ENCODE measurements at regions of chr20 and their contacts with region 1.

Region 1: DNA sequence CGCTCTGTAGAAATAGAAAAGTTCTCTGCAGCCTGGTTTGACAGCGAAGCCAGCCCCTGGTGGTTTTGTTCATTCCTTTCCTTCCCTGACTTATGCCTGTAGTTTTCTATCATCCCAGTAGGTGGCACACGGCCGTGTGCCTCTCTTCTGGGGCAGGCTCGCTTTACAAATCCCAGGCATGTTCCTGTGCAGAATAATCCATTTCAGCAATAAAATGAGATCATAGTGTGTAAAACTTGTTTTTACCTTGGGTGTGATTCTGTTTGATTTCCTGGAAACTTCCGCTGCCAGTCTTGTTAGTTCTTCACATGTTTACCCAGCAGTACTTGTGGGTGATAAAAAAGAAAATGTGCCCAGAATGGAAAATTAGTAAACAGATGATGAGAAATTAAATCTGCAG is 7.4 kb upstream of the INSM1 start:
- DNase-seq: peak in 1 of 5 donors; percentile 22
- ATAC-seq: peak; percentile 64 to 86 (median 80)
- H3K4me3 ChIP-seq: no peak overlapping the region
- H3K27ac ChIP-seq: no peak overlapping the region
- H3K4me1 ChIP-seq: peaks cover 0 to 21% (median 0%) of the 10 kb centered on the region in 12 donors
- H3K27me3 ChIP-seq: peaks cover 19 to 53% (median 23%) of the 10 kb centered on the region in 9 donors
- CTCF ChIP-seq: peak; percentile 58 to 75 (median 69)
- POLR2A ChIP-seq: no peak

Region 2: GRCh38 chr20:20073801-20074371 is 286.6 kb before region 1 on chr20:
- intact Hi-C with region 1: loop called in 1 of 10 experiments (anchors 5 kb)
- DNase-seq: no peak
- ATAC-seq: no peak
- H3K4me3 ChIP-seq: no peak overlapping the region
- H3K27ac ChIP-seq: no peak overlapping the region
- H3K4me1 ChIP-seq: peaks cover 0 to 13% (median 0%) of the 10 kb centered on the region in 12 donors
- H3K27me3 ChIP-seq: peaks cover 0 to 6% (median 0%) of the 10 kb centered on the region in 9 donors
- CTCF ChIP-seq: no peak
- POLR2A ChIP-seq: no peak

Region 3: DNA sequence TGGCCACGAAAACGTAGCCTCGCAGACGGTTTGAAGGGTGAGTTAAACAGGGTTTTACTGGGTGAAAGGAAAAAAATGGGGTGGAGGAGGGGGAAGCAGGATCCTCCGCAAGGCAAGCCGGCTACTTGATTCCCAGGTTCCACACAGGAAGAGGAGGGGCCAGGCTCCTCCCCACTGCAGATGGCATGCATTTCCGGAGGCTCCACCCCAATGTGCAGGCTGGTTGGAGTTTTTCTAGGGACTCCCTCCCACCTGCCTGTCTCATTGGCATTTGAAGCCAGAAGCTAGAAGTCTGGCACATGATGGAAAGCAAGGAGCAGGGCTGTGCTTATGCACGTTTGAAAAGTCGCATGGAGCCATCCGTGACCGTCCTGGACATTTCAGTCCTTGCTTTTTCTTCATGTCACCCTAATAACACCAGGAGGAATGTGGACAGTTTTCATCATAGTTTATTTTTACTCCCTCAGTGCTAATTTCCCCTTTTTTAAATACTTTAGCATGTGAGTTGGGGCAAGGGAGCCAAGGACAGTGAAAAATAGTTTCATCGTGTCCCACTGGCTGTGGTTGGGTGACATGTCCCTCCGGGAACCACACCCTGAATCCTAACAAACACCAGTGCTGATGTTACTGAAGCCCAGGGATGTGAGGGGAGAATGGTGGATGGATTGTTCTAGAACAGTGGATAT is 92.6 kb before region 1 on chr20:
- intact Hi-C with region 1: no loop called
- DNase-seq: peak in 1 of 5 donors; percentile 48
- ATAC-seq: peak in 1 of 4 donors; percentile 46
- H3K4me3 ChIP-seq: no peak overlapping the region
- H3K27ac ChIP-seq: no peak overlapping the region
- H3K4me1 ChIP-seq: peaks cover 0 to 15% (median 0%) of the 10 kb centered on the region in 12 donors
- H3K27me3 ChIP-seq: peaks cover 0 to under 1% (median 0%) of the 10 kb centered on the region in 9 donors
- CTCF ChIP-seq: no peak
- POLR2A ChIP-seq: no peak

Region 4: DNA sequence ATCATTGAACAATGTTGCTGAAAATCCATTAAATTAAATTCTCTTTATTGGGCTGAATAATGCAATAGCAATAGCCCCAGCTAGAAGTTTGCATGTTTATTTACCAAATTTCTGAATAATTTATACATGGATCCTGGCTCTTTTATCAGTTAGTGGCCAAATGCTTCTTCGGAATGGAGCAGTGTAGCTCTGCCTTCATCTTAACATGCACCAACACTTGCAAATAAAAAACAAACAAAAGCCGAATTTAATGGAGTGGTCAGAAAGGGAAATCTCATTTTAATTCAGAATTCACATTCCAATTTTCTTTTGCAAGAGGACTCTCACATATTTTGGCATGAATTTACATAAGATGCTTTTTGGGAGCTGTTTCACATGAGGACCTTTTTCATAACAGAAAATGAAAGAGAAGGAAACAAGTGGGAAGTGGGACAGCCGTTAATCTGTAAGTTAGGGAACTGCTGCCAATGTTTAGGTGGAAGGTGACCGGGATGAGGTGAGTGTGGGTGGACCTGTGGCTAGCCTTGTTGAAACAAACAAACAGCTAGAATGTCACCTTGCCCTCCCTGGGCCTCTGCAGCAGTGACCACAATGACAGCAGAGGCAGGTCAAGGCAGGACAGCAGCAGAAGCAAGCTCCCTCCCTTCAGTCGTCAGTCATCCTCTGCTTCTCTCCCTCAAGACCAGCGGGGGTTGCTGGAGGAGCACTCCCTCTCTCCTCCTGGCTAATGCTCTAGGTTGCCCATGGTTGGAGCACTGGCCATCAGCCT is 80.6 kb after region 1 on chr20:
- intact Hi-C with region 1: loop called in 1 of 10 experiments (anchors 10 kb)
- DNase-seq: no peak
- ATAC-seq: peak; percentile 20 to 73 (median 56)
- H3K4me3 ChIP-seq: no peak overlapping the region
- H3K27ac ChIP-seq: no peak overlapping the region
- H3K4me1 ChIP-seq: peaks cover 0 to 13% (median 5%) of the 10 kb centered on the region in 12 donors
- H3K27me3 ChIP-seq: no peaks in the 10 kb centered on the region
- CTCF ChIP-seq: no peak
- POLR2A ChIP-seq: no peak

Region 5: DNA sequence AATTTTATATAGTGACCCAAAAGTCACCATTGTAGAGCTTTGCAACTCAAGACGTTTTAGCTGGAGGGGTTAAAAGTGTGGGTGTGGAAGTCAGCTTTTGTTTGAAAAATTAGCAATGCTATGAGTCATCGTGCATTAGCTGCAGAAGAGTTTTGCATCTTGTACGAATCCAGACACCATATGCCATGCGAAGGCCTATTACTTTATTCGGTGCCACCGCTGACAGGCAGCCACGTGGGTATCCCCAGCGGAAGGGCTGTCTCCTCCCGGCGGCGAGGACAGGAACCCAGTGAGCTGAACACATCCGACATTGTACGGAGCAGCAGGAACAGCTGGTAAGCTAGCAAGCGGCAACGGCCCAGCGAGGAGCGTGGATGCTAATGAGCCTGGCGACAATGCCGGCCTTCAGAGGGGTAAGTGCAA is 91.8 kb after region 1 on chr20:
- intact Hi-C with region 1: loop called in 2 of 10 experiments (anchors 10 kb)
- DNase-seq: peak; percentile 29 to 83 (median 59)
- ATAC-seq: peak; percentile 13 to 69 (median 50)
- H3K4me3 ChIP-seq: peak overlapping the region in 5 of 12 donors; percentile 2 to 38 (median 5)
- H3K27ac ChIP-seq: peak overlapping the region in 1 of 12 donors; percentile 30
- H3K4me1 ChIP-seq: peaks cover 0 to 53% (median 22%) of the 10 kb centered on the region in 12 donors
- H3K27me3 ChIP-seq: no peaks in the 10 kb centered on the region
- CTCF ChIP-seq: peak in 1 of 12 donors; percentile 11
- POLR2A ChIP-seq: no peak

Region 6: DNA sequence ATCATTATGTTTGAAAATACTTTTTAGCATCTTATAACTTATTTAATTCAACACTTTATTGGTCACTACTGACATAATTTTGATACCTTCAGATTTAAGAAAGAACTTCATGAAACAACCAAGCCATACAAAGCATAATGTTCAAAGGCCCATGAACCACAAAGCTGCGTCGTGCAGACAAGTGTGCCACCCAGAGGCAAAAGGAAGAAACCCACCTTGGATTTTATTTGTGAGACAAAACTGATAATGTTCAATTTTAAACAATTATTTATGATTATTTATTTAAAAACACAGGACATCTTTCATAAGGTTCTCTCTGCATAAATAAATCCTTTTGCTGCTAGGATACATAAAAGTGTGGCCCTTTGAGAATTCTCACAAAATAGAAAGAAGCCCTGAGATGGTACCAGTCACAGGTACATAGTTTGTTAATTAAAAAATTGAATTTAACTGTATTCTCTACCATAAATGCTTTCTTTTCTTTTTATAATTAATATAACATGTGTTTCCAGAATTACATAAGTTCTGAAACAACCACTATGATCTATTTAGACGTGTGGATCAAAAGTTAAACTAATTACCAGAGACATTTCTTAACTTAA is 208.2 kb after region 1 on chr20:
- intact Hi-C with region 1: loop called (anchors 1 to 10 kb)
- DNase-seq: no peak
- ATAC-seq: no peak
- H3K4me3 ChIP-seq: no peak overlapping the region
- H3K27ac ChIP-seq: no peak overlapping the region
- H3K4me1 ChIP-seq: no peaks in the 10 kb centered on the region
- H3K27me3 ChIP-seq: no peaks in the 10 kb centered on the region
- CTCF ChIP-seq: peak; percentile 40 to 75 (median 64)
- POLR2A ChIP-seq: no peak

Measured in heart left ventricle (tissue), 16 donors.